Naive thymus-derived CD4-positive, alpha-beta T cell (primary cell): ENCODE measurements at regions of chr7 and their contacts with region 1.

Region 1: DNA sequence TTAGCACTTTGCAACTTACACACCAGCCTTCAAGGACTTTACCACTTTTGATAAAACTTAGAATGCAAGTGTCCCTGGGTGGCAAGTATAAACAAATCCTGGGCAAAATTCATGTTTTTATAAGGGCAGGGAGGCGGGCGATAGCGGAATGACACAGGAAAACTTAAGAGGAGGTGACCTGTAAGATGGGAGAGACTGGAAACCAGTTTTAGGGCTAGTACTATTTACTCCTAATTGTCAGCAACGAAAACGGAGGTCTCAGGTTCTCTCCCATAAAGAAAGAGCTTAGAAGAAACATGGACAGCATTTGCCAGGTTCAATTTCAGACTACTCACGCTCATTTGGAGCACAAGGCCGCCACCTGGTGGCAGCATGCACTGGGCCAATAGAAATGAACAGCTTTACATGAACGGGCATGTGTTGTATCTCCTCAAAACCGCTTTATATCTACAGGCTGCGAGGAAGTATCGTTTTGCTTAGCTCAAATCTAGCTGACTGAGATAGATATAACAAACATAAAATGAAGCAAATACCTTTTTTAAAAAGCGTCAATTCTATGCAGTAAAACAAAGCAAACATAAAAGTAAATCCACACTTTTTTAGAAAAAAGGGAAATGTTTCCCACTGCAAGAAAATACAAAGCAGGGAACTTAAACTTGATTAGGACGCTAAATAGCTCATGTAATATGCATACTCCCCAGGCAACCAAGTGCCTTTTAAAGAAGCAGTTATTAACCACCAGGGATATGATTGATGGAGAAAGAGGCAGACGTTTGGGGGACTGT is 37.6 kb upstream of the SVOPL start:
- DNase-seq: peak; percentile 70 to 86 (median 80)
- ATAC-seq: peak; percentile 92
- H3K4me3 ChIP-seq: no peak overlapping the region
- H3K4me3 Mint-ChIP-seq: no peak overlapping the region
- H3K27ac ChIP-seq: no peak overlapping the region
- H3K27ac Mint-ChIP-seq: peak overlapping the region in 7 of 9 donors; percentile 1 to 83 (median 65)
- H3K4me1 ChIP-seq: no peaks in the 10 kb centered on the region
- H3K4me1 Mint-ChIP-seq: peaks cover 0 to 7% (median 4%) of the 10 kb centered on the region in 7 donors
- H3K27me3 ChIP-seq: no peaks in the 10 kb centered on the region
- H3K27me3 Mint-ChIP-seq: no peaks in the 10 kb centered on the region

Region 2: GRCh38 chr7:137898839-137899721 is 839.7 kb before region 1 on chr7:
- CTCF ChIA-PET with region 1: interaction called, 10 read pairs
- POLR2A ChIA-PET with region 1: no interaction called
- intact Hi-C with region 1: loop called (anchors 1 kb)
- DNase-seq: peak; percentile 46 to 81 (median 68)
- ATAC-seq: peak; percentile 92
- H3K4me3 ChIP-seq: no peak overlapping the region
- H3K4me3 Mint-ChIP-seq: peak overlapping the region; percentile 51 to 82 (median 66)
- H3K27ac ChIP-seq: no peak overlapping the region
- H3K27ac Mint-ChIP-seq: peak overlapping the region in 8 of 9 donors; percentile 19 to 72 (median 62)
- H3K4me1 ChIP-seq: peaks cover 0 to 6% of the 10 kb centered on the region in 2 donors
- H3K4me1 Mint-ChIP-seq: peaks cover 10 to 36% (median 16%) of the 10 kb centered on the region in 7 donors
- H3K27me3 ChIP-seq: no peaks in the 10 kb centered on the region
- H3K27me3 Mint-ChIP-seq: no peaks in the 10 kb centered on the region

Region 3: DNA sequence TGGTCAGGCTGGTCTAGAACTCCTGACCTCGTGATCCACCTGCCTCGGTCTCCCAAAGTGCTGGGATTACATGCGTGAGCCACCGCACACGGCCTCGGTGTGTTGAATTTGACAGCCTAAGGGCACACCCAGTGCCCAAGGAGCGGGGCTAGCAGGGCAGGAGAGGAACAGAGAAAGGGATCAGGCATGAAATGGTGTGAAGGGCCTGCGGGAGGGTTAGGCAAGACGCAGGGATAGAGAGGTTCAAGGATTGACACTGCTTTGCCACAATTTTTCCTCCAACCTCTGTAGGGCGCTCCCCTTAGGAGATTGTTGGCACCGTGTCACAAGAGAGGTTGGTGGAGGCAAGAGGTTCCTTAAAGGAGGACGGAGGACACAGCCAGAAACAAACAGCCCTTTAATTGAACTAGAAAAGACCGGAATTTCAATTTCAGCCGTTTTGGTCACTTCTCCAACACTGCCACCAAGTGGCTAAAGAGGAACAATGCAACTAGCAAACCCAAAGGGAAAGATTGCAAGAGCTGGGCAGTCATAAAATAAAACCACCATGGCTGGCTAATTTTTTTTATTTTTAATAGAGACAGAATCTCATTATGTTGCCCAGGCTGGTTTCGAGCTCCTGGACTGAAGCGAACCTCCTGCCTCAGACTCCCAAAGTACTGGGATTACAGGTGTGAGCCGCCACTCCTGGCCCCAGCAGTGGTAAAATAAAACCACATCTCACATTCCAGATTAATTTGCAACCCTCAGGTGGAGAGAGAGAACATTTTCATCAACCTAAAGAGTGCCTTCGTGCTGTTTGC is 730.0 kb before region 1 on chr7:
- CTCF ChIA-PET with region 1: interaction called, 4 read pairs
- POLR2A ChIA-PET with region 1: no interaction called
- intact Hi-C with region 1: loop called (anchors 1 kb)
- DNase-seq: peak in 7 of 9 donors; percentile 20 to 63 (median 52)
- ATAC-seq: peak; percentile 80
- H3K4me3 ChIP-seq: no peak overlapping the region
- H3K4me3 Mint-ChIP-seq: no peak overlapping the region
- H3K27ac ChIP-seq: no peak overlapping the region
- H3K27ac Mint-ChIP-seq: peak overlapping the region in 1 of 9 donors; percentile 20
- H3K4me1 ChIP-seq: peaks cover 0 to 3% of the 10 kb centered on the region in 2 donors
- H3K4me1 Mint-ChIP-seq: peaks cover 3 to 13% (median 10%) of the 10 kb centered on the region in 7 donors
- H3K27me3 ChIP-seq: no peaks in the 10 kb centered on the region
- H3K27me3 Mint-ChIP-seq: peaks cover 0 to 6% (median 0%) of the 10 kb centered on the region in 5 donors

Region 4: DNA sequence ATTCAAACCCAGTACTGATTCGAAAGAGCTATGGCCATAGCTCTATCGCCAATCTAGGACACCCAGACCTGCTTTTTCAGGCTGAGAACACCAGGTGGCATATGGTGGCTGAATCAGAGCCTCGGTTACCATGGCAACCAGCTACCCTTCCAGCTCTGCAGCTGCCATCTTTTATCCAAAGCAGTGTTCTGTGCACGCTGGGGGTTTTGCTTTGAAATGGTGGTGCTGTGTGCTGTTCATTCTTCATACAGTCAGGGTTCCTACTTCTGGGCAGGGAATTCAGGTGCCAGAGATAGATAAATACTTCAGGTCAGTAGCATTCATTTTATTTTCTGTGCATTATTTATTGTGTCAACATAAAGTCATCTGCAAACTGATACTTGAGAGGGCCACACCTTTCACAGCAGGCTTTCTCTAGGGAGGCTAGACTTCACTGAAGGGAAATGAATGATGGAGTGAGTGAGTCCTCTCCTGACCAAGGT is 577.1 kb before region 1 on chr7:
- CTCF ChIA-PET with region 1: interaction called, 40 read pairs
- POLR2A ChIA-PET with region 1: interaction called, 3 read pairs
- intact Hi-C with region 1: loop called (anchors 1 kb)
- DNase-seq: peak; percentile 24 to 87 (median 79)
- ATAC-seq: peak; percentile 99
- H3K4me3 ChIP-seq: no peak overlapping the region
- H3K4me3 Mint-ChIP-seq: no peak overlapping the region
- H3K27ac ChIP-seq: no peak overlapping the region
- H3K27ac Mint-ChIP-seq: no peak overlapping the region
- H3K4me1 ChIP-seq: no peaks in the 10 kb centered on the region
- H3K4me1 Mint-ChIP-seq: no peaks in the 10 kb centered on the region
- H3K27me3 ChIP-seq: no peaks in the 10 kb centered on the region
- H3K27me3 Mint-ChIP-seq: peaks cover 0 to 7% (median 0%) of the 10 kb centered on the region in 5 donors

Region 5: DNA sequence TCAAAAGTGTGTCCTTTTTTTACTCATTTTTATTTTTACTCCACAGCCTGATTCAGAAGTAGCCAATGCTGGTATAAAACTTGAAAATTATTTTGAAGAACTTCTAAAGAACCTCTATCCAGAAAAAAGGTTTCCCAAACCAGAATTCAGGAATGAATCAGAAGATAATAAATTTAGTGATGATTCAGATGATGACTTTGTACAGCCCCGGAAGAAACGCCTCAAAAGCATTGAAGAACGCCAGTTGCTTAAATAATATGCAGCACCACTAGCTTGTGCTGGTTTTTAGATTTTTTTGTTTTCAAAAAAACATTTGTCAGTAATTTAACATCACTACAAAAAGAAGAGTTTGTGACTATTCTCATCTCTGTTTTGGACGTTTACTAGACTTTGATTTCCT is 154.0 kb before region 1 on chr7:
- CTCF ChIA-PET with region 1: no interaction called
- POLR2A ChIA-PET with region 1: no interaction called
- intact Hi-C with region 1: loop called in 1 of 2 experiments (anchors 5 kb)
- DNase-seq: no peak
- ATAC-seq: no peak
- H3K4me3 ChIP-seq: no peak overlapping the region
- H3K4me3 Mint-ChIP-seq: no peak overlapping the region
- H3K27ac ChIP-seq: no peak overlapping the region
- H3K27ac Mint-ChIP-seq: peak overlapping the region in 1 of 9 donors; percentile 56
- H3K4me1 ChIP-seq: no peaks in the 10 kb centered on the region
- H3K4me1 Mint-ChIP-seq: peaks cover 0 to 4% (median 0%) of the 10 kb centered on the region in 7 donors
- H3K27me3 ChIP-seq: no peaks in the 10 kb centered on the region
- H3K27me3 Mint-ChIP-seq: no peaks in the 10 kb centered on the region

Region 6: DNA sequence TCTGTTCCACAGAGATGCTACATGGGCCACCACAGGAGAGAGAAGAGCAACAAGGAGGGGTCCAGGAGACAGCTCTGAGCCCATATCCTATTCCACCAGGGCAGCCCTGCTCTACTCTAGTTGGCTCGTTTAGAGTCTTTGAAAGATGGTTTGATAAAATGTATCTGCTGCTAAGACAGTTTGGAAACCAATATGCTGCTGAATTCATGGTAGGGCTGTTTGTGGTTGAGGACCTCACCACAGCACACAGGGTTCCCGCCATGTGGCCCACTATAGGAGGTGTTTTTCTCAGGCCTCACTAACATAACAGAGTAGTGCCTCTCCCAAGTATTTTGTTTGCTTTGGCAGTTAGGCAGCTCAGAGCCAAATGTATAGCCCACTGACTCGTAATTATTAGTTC is 332.9 kb after region 1 on chr7:
- CTCF ChIA-PET with region 1: no interaction called
- POLR2A ChIA-PET with region 1: no interaction called
- intact Hi-C with region 1: no loop called
- DNase-seq: no peak
- ATAC-seq: peak; percentile 43
- H3K4me3 ChIP-seq: no peak overlapping the region
- H3K4me3 Mint-ChIP-seq: peak overlapping the region in 9 of 10 donors; percentile 23 to 79 (median 63)
- H3K27ac ChIP-seq: peak overlapping the region; percentile 15
- H3K27ac Mint-ChIP-seq: peak overlapping the region; percentile 75 to 96 (median 89)
- H3K4me1 ChIP-seq: peaks cover 11 to 36% of the 10 kb centered on the region in 2 donors
- H3K4me1 Mint-ChIP-seq: peaks cover 31 to 77% (median 67%) of the 10 kb centered on the region in 7 donors
- H3K27me3 ChIP-seq: no peaks in the 10 kb centered on the region
- H3K27me3 Mint-ChIP-seq: no peaks in the 10 kb centered on the region

Region 7: DNA sequence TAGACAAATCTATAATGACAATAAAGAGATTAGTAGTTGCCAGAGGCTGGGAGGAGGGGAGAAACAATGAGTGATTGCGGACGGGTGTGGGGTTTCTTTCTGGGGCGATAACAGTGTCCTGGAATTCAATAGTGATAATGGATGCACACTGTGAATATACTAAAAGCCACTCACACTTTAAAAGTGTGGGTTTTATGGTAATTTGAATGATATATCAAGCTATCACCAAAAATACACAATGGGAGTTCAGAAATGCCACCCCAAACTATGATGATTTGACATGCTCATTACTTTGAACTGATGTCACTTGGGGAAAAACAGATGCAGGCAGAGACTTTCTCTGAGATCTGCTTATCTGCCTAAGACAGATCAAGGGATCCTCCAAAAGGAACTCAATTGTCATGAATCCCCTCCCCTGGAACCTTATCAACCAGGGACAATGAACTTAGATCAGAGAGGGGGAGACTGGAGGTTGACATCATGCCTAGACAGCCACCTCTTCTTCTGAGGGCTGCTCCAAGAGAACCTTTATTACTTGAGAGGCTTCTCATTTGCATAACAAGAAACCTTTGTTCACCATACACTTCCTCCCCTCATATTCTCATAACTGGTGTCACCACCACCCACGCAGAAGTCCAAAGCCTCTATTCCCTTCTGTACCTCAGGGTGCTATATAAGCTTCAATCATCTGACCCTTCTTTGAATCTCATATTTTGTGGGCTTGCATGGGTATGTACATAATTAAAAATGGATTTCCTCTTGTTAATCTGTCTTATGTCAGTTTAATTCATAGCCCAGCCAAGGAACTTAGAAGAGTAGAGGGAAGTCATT is 385.6 kb after region 1 on chr7:
- CTCF ChIA-PET with region 1: interaction called, 3 read pairs
- POLR2A ChIA-PET with region 1: interaction called, 4 read pairs
- intact Hi-C with region 1: loop called in 1 of 2 experiments (anchors 2 kb)
- DNase-seq: no peak
- ATAC-seq: no peak
- H3K4me3 ChIP-seq: no peak overlapping the region
- H3K4me3 Mint-ChIP-seq: peak overlapping the region in 2 of 10 donors; percentile 3 to 31
- H3K27ac ChIP-seq: no peak overlapping the region
- H3K27ac Mint-ChIP-seq: peak overlapping the region in 1 of 9 donors; percentile 43
- H3K4me1 ChIP-seq: peaks cover 1 to 20% of the 10 kb centered on the region in 2 donors
- H3K4me1 Mint-ChIP-seq: peaks cover 7 to 40% (median 25%) of the 10 kb centered on the region in 7 donors
- H3K27me3 ChIP-seq: no peaks in the 10 kb centered on the region
- H3K27me3 Mint-ChIP-seq: peaks cover 0 to 7% (median 0%) of the 10 kb centered on the region in 5 donors